MCF 10A (cell line): ENCODE measurements at regions of chr17 and their contacts with region 1.

Region 1: DNA sequence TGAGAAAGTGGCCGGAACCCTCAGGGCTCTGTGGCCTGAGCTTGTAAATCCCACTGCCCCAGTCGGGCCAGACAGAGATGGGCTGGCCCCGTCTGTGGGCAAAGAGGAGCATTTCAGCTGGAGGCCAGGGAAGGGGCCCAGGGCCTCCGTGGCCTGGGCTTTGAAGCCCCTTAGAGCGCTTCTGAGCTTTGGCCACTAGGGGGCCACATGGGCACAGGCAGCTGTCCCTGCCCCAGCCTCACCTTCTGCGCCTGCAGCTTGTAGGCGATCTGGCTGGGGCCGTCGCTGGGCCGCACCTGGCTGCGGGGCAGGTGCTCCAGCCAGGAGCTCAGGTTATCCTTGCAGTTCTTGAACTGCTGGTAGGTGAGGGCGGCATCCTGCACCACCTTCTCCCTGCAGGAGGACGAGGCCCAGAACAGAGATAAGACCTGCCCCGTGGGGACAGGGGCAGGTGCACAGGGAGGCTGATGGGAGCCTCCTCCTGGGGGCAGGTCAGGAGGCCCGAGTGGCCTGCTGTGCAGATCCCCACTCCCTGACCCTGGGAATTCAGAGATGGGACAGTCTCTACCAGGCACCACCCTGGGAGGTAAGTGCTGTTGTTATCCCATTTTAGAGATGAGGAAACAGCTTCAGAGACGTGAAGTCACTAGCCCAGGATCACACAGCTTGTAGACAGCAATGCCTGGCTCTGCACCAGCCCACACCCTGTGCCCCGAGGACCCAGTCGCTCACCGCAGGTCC is 12.8 kb downstream of the EVPL start:
- DNase-seq: peak; percentile 63
- H3K4me3 Mint-ChIP-seq: no peak overlapping the region
- H3K27ac Mint-ChIP-seq: no peak overlapping the region
- H3K4me1 Mint-ChIP-seq: no peaks in the 10 kb centered on the region
- H3K27me3 Mint-ChIP-seq: no peaks in the 10 kb centered on the region
- CTCF ChIP-seq: peak; percentile 95

Region 2: DNA sequence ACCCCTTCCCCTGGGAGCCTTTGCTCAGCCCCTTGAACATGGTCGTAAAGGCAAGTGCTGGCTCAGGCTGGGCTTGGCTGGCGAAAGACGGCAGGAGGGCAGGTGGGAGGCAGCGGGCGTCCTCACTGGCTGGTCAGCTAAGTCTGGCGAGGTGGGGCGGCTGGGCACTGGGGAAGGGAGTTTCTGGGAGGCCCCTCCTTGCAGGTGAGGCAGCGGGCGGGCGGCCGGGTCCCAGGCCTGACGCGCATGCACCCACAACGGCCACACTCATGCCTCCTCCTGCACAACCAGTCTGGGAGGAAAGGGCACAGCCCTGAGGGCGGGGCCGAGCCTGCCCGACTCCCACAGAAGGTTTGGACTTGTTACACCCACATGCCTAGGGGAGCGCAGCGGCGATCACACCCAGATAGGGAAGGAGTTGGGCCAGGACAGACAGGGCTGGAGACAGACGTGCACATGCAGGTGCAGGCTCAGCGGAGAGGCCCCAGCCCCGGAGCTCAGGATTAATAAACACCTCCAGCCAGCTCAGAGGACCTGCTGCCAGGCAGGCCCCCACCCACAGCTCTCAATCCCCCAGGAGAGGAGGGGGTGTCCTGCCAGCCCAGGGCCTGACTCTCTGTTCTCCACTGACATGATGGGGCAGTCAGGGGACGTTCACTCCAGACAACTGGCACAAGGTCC is 12.9 kb after region 1 on chr17 and contains the start of gene EVPL:
- CTCF ChIA-PET with region 1: interaction called, 12 read pairs
- POLR2A ChIA-PET with region 1: interaction called, 3 read pairs
- intact Hi-C with region 1: no loop called
- DNase-seq: peak; percentile 91
- H3K4me3 Mint-ChIP-seq: peak within 1 kb of the TSS; percentile 80
- H3K27ac Mint-ChIP-seq: peak within 1 kb of the TSS; percentile 74
- H3K4me1 Mint-ChIP-seq: peaks cover 6% of the 10 kb centered on the region
- H3K27me3 Mint-ChIP-seq: no peaks in the 10 kb centered on the region
- CTCF ChIP-seq: no peak
- total RNA-seq, gene EVPL: 7.7 and 8.1 TPM in 2 replicates

Region 3: DNA sequence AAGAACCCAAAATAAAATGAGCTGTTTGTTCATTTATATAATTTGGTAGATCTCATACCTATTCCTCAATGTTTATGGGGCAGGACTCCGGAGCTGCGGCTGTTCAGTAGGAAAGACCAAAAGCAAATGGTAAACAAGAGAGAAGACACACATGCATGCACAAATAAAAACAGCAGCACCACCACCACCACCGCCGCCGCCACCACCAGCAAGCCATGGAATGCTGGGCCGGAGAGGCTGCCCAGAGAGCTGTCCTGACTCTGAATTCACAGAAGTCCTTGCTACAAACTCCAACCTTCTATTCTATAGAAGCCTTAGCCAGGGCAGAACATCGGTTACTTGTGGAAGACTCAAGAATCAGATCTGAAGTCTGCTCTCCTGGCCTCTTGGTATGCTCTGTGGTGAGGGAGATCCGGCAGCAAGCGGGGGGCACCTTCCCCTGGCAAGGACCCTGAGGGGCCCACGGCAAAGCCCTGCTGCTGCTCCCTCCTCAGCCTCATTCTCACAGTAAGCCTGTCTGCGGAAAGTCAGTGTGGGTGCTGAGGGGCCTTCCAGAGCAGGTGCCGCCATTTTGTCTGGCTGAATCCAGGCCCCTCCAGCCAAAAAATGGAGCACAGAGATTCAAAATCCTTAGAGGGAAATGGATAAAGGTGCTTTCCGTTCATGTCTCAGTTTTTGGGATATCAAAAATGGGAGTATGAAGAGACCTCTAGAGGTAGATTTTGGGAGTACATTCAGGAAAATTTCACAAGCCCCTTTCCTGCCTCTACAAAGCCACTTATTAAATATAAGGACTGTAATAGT is 133.1 kb after region 1 on chr17:
- CTCF ChIA-PET with region 1: interaction called, 3 read pairs
- POLR2A ChIA-PET with region 1: no interaction called
- intact Hi-C with region 1: loop called (anchors 1 kb)
- DNase-seq: peak; percentile 53
- H3K4me3 Mint-ChIP-seq: no peak overlapping the region
- H3K27ac Mint-ChIP-seq: no peak overlapping the region
- H3K4me1 Mint-ChIP-seq: no peaks in the 10 kb centered on the region
- H3K27me3 Mint-ChIP-seq: no peaks in the 10 kb centered on the region
- CTCF ChIP-seq: peak; percentile 48

Region 4: GRCh38 chr17:76327696-76328095 is 313.3 kb after region 1 on chr17:
- CTCF ChIA-PET with region 1: no interaction called
- POLR2A ChIA-PET with region 1: no interaction called
- intact Hi-C with region 1: no loop called
- DNase-seq: no peak
- H3K4me3 Mint-ChIP-seq: no peak overlapping the region
- H3K27ac Mint-ChIP-seq: no peak overlapping the region
- H3K4me1 Mint-ChIP-seq: no peaks in the 10 kb centered on the region
- H3K27me3 Mint-ChIP-seq: no peaks in the 10 kb centered on the region
- CTCF ChIP-seq: no peak